Thyroid gland (tissue), 4 donors: ENCODE measurements at regions of chr6 and their contacts with region 1.

Region 1: DNA sequence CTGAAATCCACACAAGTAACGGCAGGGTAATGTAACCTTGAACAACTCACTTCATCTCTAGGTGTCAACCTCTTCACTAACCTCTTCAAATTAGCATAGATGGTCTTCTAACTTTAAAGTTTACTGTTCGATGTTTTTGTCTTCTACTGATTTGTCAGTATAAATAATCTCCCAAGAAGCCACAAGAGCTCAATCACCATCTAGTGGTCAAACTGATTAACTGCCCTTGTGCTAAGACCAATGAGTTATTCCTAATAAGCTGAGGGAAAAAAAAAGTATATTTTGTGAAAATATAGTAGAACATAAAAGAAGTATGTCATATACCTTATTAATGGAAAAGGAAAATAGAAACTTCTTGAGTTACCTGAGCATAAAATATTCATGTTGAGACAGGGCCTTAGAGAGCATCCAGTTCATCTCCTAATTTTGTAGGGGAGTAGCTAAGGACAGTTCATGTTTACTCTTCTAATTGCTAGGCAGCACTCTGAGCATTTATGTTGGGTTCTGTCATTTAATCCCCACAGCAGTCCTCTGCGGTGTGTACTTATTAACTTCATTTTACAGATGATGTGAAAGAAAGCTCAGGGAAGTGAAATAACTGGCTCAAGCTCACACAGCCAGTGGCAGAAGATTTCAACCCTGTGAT is 317.1 kb downstream of the ESR1 start:
- DNase-seq: no peak
- H3K4me3 ChIP-seq: no peak overlapping the region
- H3K27ac ChIP-seq: no peak overlapping the region
- H3K4me1 ChIP-seq: peaks cover 0 to 4% of the 10 kb centered on the region in 2 donors
- H3K27me3 ChIP-seq: no peaks in the 10 kb centered on the region
- CTCF ChIP-seq: peak; percentile 40 to 90 (median 77)
- POLR2A ChIP-seq: no peak

Region 2: DNA sequence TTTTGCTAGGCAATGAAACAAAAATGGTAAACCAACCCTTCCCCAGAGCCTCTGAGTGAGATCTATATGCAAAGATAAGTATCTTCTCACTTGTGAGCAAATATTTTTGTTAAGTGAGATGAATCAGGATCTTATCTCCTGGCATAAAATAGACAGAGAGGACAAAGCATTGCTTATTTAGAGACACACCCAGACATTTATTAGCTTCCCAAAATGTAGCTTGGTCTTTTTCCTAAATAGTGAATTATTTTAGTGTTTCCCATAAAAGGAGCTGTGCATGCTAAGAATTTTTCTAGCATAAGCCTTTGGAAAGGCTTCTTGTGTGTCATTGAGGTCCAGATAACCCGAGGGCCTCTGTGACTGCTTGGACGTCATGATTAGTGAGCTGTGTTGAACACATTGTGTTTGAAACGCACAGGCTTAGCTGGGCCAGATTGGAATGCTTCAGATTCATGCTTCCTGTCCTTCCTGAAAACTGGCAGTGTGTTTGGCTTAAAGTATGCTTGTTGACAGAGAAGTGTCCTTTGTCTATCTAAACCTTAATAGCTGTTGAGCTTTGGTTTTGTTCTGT is 1242.6 kb before region 1 on chr6:
- intact Hi-C with region 1: no loop called
- DNase-seq: peak; percentile 82 to 84
- H3K4me3 ChIP-seq: no peak overlapping the region
- H3K27ac ChIP-seq: peak overlapping the region; percentile 85 to 96 (median 92)
- H3K4me1 ChIP-seq: peaks cover 21 to 26% of the 10 kb centered on the region in 2 donors
- H3K27me3 ChIP-seq: no peaks in the 10 kb centered on the region
- CTCF ChIP-seq: no peak
- POLR2A ChIP-seq: peak in 1 of 2 donors; percentile 34

Region 3: DNA sequence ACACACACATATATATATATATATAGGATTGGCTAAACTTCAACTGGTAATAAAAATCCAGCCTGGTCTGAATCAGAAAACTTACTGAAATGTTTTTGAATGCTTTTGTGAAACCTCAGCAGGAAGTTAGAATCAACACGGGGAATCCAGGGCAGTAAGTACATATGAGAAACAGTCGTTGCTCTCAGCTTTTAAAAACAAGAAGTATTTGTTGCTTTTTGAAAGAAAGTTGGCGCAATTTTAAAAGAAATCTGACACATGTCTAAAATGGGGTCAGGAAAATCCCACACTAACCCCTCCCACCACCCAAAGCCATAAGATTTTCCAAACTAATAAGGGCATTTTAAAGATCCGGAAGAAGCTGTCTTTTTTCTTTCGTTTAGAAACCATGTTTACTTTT is 642.3 kb before region 1 on chr6:
- intact Hi-C with region 1: no loop called
- DNase-seq: no peak
- H3K4me3 ChIP-seq: peak overlapping the region in 1 of 3 donors; percentile 3
- H3K27ac ChIP-seq: peak overlapping the region in 1 of 3 donors; percentile 37
- H3K4me1 ChIP-seq: peaks cover 0 to 9% of the 10 kb centered on the region in 2 donors
- H3K27me3 ChIP-seq: no peaks in the 10 kb centered on the region
- CTCF ChIP-seq: no peak
- POLR2A ChIP-seq: no peak

Region 4: GRCh38 chr6:151765444-151765886 is 359.1 kb before region 1 on chr6:
- intact Hi-C with region 1: loop called (anchors 10 kb)
- DNase-seq: peak; percentile 37 to 51
- H3K4me3 ChIP-seq: no peak overlapping the region
- H3K27ac ChIP-seq: no peak overlapping the region
- H3K4me1 ChIP-seq: peaks cover 0 to 7% of the 10 kb centered on the region in 2 donors
- H3K27me3 ChIP-seq: no peaks in the 10 kb centered on the region
- CTCF ChIP-seq: peak; percentile 27 to 79 (median 64)
- POLR2A ChIP-seq: no peak